ENCODE measurements at regions of chr2 and their contacts with region 1.

Region 1: DNA sequence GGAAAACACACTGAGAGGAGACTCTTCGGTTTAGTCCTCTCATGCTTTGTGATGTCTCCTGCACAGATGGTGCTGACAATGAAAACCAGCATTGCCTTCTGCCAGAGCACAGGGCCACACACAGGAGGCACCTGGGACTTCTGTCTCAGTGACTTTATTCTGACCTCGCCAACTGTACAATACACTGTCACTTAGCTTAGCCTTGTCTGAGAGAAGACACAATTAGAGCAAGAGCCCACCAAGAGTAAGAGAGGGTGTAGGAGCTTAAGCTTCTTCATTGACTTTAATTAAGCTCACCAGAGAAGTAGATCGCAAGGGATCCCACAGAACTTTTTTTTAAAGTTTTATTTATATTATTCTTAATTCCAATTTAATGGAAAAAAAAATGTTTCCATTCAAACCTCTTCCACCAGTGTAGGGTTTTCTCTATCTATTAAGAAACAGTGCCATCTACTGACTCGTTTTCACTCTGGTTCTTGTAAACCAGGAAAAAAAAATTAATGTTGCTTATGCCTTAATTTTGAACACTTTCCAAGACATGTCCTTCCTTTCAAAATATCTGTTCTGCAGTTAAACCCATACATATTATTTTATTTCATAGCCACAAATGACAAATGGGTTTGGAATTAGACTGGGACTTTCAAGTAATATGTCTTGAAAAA is 42.4 kb upstream of the DDX18 start:
- DNase-seq: no peak
- H3K4me3 ChIP-seq: no peak overlapping the region
- H3K27ac ChIP-seq: no peak overlapping the region
- H3K4me1 ChIP-seq: peaks cover 12% of the 10 kb centered on the region
- H3K27me3 ChIP-seq: no peaks in the 10 kb centered on the region
- CTCF ChIP-seq: peak; percentile 38 to 54

Region 2: DNA sequence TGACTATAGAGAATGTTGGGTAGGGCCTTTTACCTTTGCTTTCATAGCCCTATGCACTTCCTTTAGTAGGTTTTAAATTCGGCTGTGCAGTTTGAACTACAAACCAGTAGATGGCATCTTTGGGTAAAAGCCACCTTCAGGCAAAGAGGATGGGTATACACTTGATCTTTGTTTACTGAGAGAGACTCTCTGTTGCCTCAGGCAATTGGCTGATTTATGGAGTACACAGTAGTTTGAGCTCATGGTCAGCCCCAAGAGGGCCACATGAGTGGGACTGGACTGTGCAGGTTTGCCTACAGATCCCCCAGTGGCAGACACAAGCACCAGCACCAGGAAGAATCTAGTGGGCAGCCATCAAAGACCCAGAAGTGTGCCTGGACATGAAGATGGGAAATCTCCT is 1261.9 kb before region 1 on chr2:
- CTCF ChIA-PET with region 1: no interaction called
- dilution Hi-C with region 1: no loop called
- in situ Hi-C with region 1: no loop called
- intact Hi-C with region 1: loop called (anchors 5 kb)
- DNase-seq: no peak
- H3K4me3 ChIP-seq: no peak overlapping the region
- H3K27ac ChIP-seq: no peak overlapping the region
- H3K4me1 ChIP-seq: no peaks in the 10 kb centered on the region
- H3K27me3 ChIP-seq: no peaks in the 10 kb centered on the region
- CTCF ChIP-seq: peak; percentile 10 to 45

Region 3: DNA sequence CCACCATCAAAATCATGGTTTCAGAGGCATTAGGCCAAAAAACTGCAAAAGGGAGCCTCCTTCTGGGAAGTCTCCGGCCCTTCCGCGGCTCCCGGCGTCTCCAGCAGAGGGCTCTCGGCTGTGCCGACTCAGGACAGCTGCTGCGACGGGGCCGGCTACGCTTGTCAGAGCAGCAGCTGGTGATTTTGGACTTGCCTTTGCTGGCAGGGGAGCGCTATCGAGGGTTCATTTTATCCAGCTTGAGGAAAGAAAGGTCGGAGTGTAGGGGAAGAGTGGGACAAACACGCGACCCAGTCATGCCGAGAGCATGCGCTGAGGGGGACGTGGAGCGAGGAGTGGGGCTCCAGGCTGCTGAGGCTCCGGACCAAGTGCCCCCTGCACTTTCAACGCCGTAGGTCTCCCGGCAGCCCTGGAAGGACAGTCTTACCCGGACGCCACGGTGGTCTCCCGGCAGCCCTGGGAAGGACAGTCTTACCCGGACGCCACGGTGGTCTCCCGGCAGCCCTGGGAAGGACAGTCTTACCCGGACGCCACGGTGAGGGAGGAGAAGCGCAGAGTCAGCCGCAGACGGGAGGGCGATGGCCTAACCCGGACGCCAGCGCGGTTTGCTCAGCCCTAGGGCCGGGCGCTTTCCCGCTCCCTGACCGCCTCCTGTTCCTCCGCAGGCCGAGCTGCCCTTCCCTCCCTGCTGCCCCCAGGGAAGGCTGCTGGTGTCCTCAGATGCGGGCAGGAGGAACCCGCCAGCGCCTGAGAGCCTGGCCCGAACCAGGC is 64.1 kb after region 1 on chr2:
- CTCF ChIA-PET with region 1: no interaction called
- dilution Hi-C with region 1: no loop called
- in situ Hi-C with region 1: no loop called
- intact Hi-C with region 1: no loop called
- DNase-seq: peak; percentile 39
- H3K4me3 ChIP-seq: peak overlapping the region in 1 of 3 experiments; percentile 20
- H3K27ac ChIP-seq: no peak overlapping the region
- H3K4me1 ChIP-seq: peaks cover 8% of the 10 kb centered on the region
- H3K27me3 ChIP-seq: no peaks in the 10 kb centered on the region
- CTCF ChIP-seq: peak; percentile 68 to 93

Region 4: DNA sequence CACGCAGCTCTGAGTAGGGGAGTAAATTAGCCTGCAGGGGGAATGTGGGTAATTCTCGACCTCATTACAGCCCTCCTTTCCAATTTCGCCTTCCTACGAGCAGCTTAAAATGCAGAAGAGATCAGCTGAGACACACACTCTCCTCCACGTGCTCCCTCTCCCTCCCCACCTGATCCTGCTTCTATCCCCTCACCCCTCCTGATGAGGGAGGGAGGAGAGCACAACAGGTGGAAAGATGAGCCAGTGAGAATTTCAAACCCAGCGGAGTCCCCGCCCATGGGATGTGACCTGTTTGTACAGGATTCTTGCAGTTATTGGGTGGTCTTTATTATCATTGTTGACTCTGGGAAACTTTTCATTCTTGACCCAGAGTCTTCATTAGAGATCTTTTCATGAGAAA is 77.9 kb after region 1 on chr2:
- CTCF ChIA-PET with region 1: no interaction called
- dilution Hi-C with region 1: no loop called
- in situ Hi-C with region 1: no loop called
- intact Hi-C with region 1: no loop called
- DNase-seq: no peak
- H3K4me3 ChIP-seq: no peak overlapping the region
- H3K27ac ChIP-seq: no peak overlapping the region
- H3K4me1 ChIP-seq: no peaks in the 10 kb centered on the region
- H3K27me3 ChIP-seq: peaks cover 10% of the 10 kb centered on the region
- CTCF ChIP-seq: no peak